B cell (primary cell): ENCODE measurements at regions of chr3 and their contacts with region 1.

Region 1: DNA sequence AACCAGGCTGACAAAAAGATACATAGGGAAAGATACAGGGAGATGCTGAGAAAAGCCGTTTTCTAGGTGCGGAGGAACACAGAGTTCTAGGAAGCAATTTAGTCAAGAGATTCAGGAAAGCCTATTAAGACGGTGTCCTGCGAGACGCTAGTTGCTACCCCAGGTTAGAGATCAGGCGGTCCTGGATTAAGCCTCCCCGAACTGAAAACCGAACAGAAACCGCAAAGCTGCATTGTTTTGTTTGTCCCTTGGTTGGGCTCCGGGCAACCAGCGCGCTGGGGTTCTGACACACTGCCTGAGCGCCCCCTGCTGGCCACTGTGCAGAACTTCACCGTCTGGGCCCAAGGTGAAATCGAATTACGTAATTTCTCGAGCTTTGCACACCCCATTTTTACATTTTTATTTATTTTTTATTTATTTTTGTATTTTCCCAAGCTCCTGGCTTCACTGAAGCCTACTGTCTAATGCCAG is 37.3 kb upstream of the NDUFB4 start:
- DNase-seq: peak; percentile 94
- ATAC-seq: peak; percentile 87
- H3K4me3 ChIP-seq: peak overlapping the region; percentile 24 to 69 (median 55)
- H3K4me3 Mint-ChIP-seq: peak overlapping the region; percentile 89
- H3K27ac ChIP-seq: peak overlapping the region in 1 of 2 donors; percentile 60
- H3K27ac Mint-ChIP-seq: peak overlapping the region; percentile 83
- H3K4me1 ChIP-seq: peaks cover 12 to 15% of the 10 kb centered on the region in 2 donors
- H3K4me1 Mint-ChIP-seq: peaks cover 19% of the 10 kb centered on the region
- H3K27me3 ChIP-seq: peaks cover 0 to 14% (median 9%) of the 10 kb centered on the region in 4 experiments
- H3K27me3 Mint-ChIP-seq: peaks cover 18% of the 10 kb centered on the region
- CTCF ChIP-seq: peak; percentile 96

Region 2: DNA sequence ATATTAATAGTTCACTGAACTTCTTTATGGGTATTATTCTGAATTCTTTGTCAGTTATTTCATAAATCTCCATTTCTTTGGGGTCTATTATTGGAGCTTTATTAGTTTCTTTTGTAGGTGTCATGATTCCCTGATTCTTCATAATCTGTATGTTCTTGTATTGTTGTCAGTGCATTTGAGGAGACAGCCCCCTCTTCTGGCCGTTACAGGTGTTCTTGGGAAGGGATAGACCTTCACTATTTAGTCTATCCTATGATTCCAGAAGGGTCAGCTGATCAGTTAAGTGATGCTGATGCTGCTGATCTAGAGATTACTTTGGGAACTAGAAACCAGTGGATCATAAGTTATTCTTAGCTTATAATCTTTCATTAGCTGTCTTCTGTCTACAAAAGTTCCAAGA is 1130.3 kb before region 1 on chr3:
- CTCF ChIA-PET with region 1: no interaction called
- POLR2A ChIA-PET with region 1: no interaction called
- intact Hi-C with region 1: no loop called
- DNase-seq: no peak
- ATAC-seq: no peak
- H3K4me3 ChIP-seq: no peak overlapping the region
- H3K4me3 Mint-ChIP-seq: no peak overlapping the region
- H3K27ac ChIP-seq: no peak overlapping the region
- H3K27ac Mint-ChIP-seq: no peak overlapping the region
- H3K4me1 ChIP-seq: no peaks in the 10 kb centered on the region
- H3K4me1 Mint-ChIP-seq: no peaks in the 10 kb centered on the region
- H3K27me3 ChIP-seq: no peaks in the 10 kb centered on the region
- H3K27me3 Mint-ChIP-seq: no peaks in the 10 kb centered on the region
- CTCF ChIP-seq: no peak

Region 3: GRCh38 chr3:120245386-120245785 is 313.4 kb before region 1 on chr3:
- CTCF ChIA-PET with region 1: interaction called, 64 read pairs
- POLR2A ChIA-PET with region 1: no interaction called
- intact Hi-C with region 1: no loop called
- DNase-seq: no peak
- ATAC-seq: no peak
- H3K4me3 ChIP-seq: no peak overlapping the region
- H3K4me3 Mint-ChIP-seq: no peak overlapping the region
- H3K27ac ChIP-seq: no peak overlapping the region
- H3K27ac Mint-ChIP-seq: no peak overlapping the region
- H3K4me1 ChIP-seq: no peaks in the 10 kb centered on the region
- H3K4me1 Mint-ChIP-seq: no peaks in the 10 kb centered on the region
- H3K27me3 ChIP-seq: peaks cover 0 to 8% (median 5%) of the 10 kb centered on the region in 4 experiments
- H3K27me3 Mint-ChIP-seq: peaks cover 41% of the 10 kb centered on the region
- CTCF ChIP-seq: no peak

Region 4: DNA sequence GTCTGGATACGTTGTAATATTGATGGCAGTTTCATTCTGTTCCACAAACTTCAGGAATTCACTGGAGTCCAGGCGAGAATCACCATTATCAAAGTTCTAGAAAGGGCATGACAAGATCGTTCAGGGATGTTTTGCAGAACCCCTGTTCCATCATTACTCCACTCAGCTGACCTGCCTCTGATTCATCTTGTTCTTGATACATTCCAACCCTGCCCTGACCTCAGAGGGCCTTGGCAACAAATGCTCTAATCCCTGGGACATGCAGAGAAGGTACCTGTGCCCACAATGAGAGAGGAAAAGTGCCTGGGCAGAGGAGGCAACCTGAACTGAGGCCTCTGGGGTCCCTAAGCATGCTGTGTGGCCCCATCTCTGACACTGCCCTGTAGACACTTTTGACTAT is 153.9 kb before region 1 on chr3:
- CTCF ChIA-PET with region 1: no interaction called
- POLR2A ChIA-PET with region 1: no interaction called
- intact Hi-C with region 1: no loop called
- DNase-seq: no peak
- ATAC-seq: no peak
- H3K4me3 ChIP-seq: no peak overlapping the region
- H3K4me3 Mint-ChIP-seq: no peak overlapping the region
- H3K27ac ChIP-seq: no peak overlapping the region
- H3K27ac Mint-ChIP-seq: no peak overlapping the region
- H3K4me1 ChIP-seq: peaks cover 4 to 5% of the 10 kb centered on the region in 2 donors
- H3K4me1 Mint-ChIP-seq: peaks cover 11% of the 10 kb centered on the region
- H3K27me3 ChIP-seq: no peaks in the 10 kb centered on the region
- H3K27me3 Mint-ChIP-seq: no peaks in the 10 kb centered on the region
- CTCF ChIP-seq: no peak

Region 5: GRCh38 chr3:120417272-120417911 is 141.4 kb before region 1 on chr3:
- CTCF ChIA-PET with region 1: interaction called, 34 read pairs
- POLR2A ChIA-PET with region 1: no interaction called
- intact Hi-C with region 1: loop called (anchors 1 kb)
- DNase-seq: peak; percentile 92
- ATAC-seq: peak; percentile 100
- H3K4me3 ChIP-seq: peak overlapping the region; percentile 39 to 76 (median 54)
- H3K4me3 Mint-ChIP-seq: peak overlapping the region; percentile 82
- H3K27ac ChIP-seq: no peak overlapping the region
- H3K27ac Mint-ChIP-seq: peak overlapping the region; percentile 2
- H3K4me1 ChIP-seq: peaks cover 7 to 14% of the 10 kb centered on the region in 2 donors
- H3K4me1 Mint-ChIP-seq: peaks cover 21% of the 10 kb centered on the region
- H3K27me3 ChIP-seq: no peaks in the 10 kb centered on the region
- H3K27me3 Mint-ChIP-seq: no peaks in the 10 kb centered on the region
- CTCF ChIP-seq: peak; percentile 86

Region 6: GRCh38 chr3:120742198-120742849 is 183.5 kb after region 1 on chr3 and contains the starts of genes GTF2E1 and RABL3:
- CTCF ChIA-PET with region 1: no interaction called
- POLR2A ChIA-PET with region 1: no interaction called
- intact Hi-C with region 1: loop called (anchors 1 kb)
- DNase-seq: peak; percentile 98
- ATAC-seq: peak; percentile 96
- H3K4me3 ChIP-seq: peak within 1 kb of the TSS; percentile 78 to 98 (median 94)
- H3K4me3 Mint-ChIP-seq: peak within 1 kb of the TSS; percentile 95
- H3K27ac ChIP-seq: peak within 1 kb of the TSS; percentile 99 to 100
- H3K27ac Mint-ChIP-seq: peak within 1 kb of the TSS; percentile 96
- H3K4me1 ChIP-seq: peaks cover 12 to 15% of the 10 kb centered on the region in 2 donors
- H3K4me1 Mint-ChIP-seq: peaks cover 29% of the 10 kb centered on the region
- H3K27me3 ChIP-seq: no peaks in the 10 kb centered on the region
- H3K27me3 Mint-ChIP-seq: no peaks in the 10 kb centered on the region
- CTCF ChIP-seq: no peak
- total RNA-seq, gene GTF2E1: 23.0 and 24.7 TPM in 2 replicates
- total RNA-seq, gene RABL3: 18.8 and 19.5 TPM in 2 replicates